PC-9 (cell line): ENCODE measurements at regions of chr5 and their contacts with region 1.

Region 1: GRCh38 chr5:33415811-33416354 is 24.9 kb upstream of the TARS1 start:
- DNase-seq: no peak
- H3K4me3 ChIP-seq: no peak overlapping the region
- H3K27ac ChIP-seq: no peak overlapping the region
- H3K4me1 ChIP-seq: no peaks in the 10 kb centered on the region
- H3K27me3 ChIP-seq: no peaks in the 10 kb centered on the region
- CTCF ChIP-seq: no peak

Region 2: DNA sequence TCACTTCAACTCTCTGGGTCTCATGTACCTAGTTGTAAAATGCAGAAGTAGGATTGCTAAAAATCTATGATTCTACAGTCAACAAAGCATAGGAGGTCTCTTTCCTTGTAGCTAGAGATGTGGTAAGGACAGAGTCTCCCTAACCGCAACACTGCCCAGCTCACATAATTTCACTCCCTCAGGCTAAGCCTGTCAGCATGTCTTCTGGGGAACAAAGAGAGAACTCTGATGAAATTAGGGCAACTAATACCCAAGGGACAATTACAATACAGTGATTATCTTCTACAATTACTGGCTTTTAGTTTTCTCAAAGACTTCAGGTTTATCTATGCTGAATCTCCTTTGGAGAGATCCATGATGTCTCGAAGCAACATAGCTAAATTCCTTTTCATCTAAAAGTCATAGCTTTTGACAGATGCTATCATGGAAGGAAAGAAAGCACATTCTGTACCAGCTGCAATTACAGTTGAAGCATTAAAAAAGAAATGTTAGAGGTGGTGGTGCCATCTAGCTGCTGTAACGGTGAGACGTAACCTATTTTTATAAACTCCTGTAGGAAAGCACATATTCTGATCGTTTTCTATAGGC is 116.2 kb before region 1 on chr5:
- CTCF ChIA-PET with region 1: no interaction called
- POLR2A ChIA-PET with region 1: no interaction called
- intact Hi-C with region 1: loop called (anchors 5 kb)
- DNase-seq: peak in 1 of 2 experiments; percentile 37
- H3K4me3 ChIP-seq: no peak overlapping the region
- H3K27ac ChIP-seq: no peak overlapping the region
- H3K4me1 ChIP-seq: no peaks in the 10 kb centered on the region; the same call in 1 of the 2 replicates
- H3K27me3 ChIP-seq: no peaks in the 10 kb centered on the region
- CTCF ChIP-seq: peak; percentile 77

Region 3: DNA sequence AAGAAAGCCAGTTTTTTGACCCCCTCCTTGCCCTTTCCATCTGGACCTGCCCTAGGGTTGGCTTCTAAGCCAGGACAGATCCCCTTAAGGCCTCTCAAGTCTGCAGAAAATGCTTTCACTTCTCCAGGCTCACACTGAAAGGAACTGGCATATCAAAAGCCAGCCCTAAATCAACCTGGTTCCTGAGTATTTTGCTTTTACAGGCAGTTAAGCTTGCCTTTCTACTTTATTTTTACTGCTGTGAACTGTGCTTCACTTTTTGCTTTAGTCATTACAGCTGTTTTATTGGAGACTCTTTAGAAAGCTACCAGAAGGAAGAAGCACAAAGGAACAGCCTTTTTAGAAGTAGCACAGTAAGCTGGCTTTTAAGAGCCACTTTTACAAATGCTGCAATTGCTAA is 29.9 kb after region 1 on chr5:
- CTCF ChIA-PET with region 1: no interaction called
- POLR2A ChIA-PET with region 1: no interaction called
- intact Hi-C with region 1: no loop called
- DNase-seq: no peak
- H3K4me3 ChIP-seq: no peak overlapping the region
- H3K27ac ChIP-seq: no peak overlapping the region
- H3K4me1 ChIP-seq: peaks cover 17% of the 10 kb centered on the region
- H3K27me3 ChIP-seq: no peaks in the 10 kb centered on the region
- CTCF ChIP-seq: no peak